ENCODE measurements at regions of chr9 and their contacts with region 1.

Region 1: GRCh38 chr9:29945012-29945411 is 2371.7 kb upstream of the C9orf72 start:
- DNase-seq: no peak
- H3K4me3 Mint-ChIP-seq: no peak overlapping the region
- H3K27ac Mint-ChIP-seq: no peak overlapping the region
- H3K4me1 Mint-ChIP-seq: no peaks in the 10 kb centered on the region
- H3K27me3 Mint-ChIP-seq: no peaks in the 10 kb centered on the region

Region 2: GRCh38 chr9:29928072-29928471 is 16.9 kb before region 1 on chr9:
- intact Hi-C with region 1: loop called (anchors 2 kb)
- DNase-seq: no peak
- H3K4me3 Mint-ChIP-seq: no peak overlapping the region
- H3K27ac Mint-ChIP-seq: no peak overlapping the region
- H3K4me1 Mint-ChIP-seq: no peaks in the 10 kb centered on the region
- H3K27me3 Mint-ChIP-seq: no peaks in the 10 kb centered on the region